ENCODE measurements at regions of chr6 and their contacts with region 1.

Region 1: GRCh38 chr6:13767121-13767808 is 47.1 kb downstream of the MCUR1 start:
- DNase-seq: peak; percentile 50
- ATAC-seq: peak; percentile 47
- H3K4me3 ChIP-seq: peak overlapping the region in 3 of 5 experiments; percentile 35 to 55 (median 40)
- H3K4me3 Mint-ChIP-seq: peak overlapping the region; percentile 84
- H3K27ac ChIP-seq: no peak overlapping the region
- H3K27ac Mint-ChIP-seq: no peak overlapping the region
- H3K4me1 ChIP-seq: peaks cover 24 to 29% of the 10 kb centered on the region in 2 donors
- H3K4me1 Mint-ChIP-seq: peaks cover 45% of the 10 kb centered on the region
- H3K27me3 ChIP-seq: no peaks in the 10 kb centered on the region
- H3K27me3 Mint-ChIP-seq: peaks cover 6% of the 10 kb centered on the region
- CTCF ChIP-seq: no peak

Region 2: DNA sequence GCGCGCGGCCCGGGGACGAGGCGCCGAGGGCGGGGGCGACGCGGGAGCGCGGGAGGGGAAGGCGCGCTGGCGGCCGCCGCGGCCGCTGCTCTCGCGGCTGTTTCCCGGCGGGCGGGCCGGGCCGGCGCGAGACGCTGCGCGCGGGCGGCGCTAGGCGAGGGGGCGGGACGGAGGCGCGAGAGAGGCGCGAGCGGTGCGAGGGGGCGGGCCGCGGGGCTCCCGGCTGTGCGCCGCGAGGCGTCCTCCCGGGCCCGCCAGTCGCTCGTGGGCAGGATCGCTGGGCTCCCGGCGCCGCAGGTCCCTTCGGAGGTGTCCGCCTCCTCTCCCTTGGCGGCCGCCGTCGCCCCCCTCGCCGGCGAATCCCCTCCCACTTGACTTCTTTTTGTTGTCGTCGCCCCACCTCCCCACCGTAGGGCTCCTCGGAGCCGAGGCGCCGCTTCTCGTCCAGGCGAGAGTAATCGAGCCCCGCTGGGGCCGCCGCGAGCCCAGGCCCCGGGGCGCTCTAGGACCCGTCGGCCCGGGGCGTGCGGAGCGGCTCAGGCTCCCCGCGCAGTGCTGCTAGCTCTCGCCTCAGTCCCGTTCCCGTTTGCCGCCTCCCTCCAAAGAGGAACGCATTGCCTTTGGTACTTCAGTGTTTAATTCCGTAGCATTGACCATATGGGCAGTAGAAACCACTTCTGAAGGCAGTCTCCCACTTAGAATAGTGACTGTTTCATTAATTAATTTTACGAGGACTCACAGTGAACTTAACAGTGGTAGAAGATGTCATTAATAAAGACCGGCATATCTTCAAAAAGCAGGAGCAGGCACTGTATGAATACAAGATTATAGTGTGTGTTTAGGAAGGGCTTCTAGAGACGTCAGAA is 55.3 kb before region 1 on chr6 and contains the start of gene RANBP9:
- CTCF ChIA-PET with region 1: interaction called, 3 read pairs
- POLR2A ChIA-PET with region 1: no interaction called
- intact Hi-C with region 1: loop called (anchors 5 kb)
- DNase-seq: peak; percentile 94
- ATAC-seq: peak; percentile 82
- H3K4me3 ChIP-seq: peak within 1 kb of the TSS; percentile 58 to 88 (median 78)
- H3K4me3 Mint-ChIP-seq: peak within 1 kb of the TSS; percentile 96
- H3K27ac ChIP-seq: peak within 1 kb of the TSS; percentile 80 to 84
- H3K27ac Mint-ChIP-seq: peak within 1 kb of the TSS; percentile 96
- H3K4me1 ChIP-seq: peaks cover 29 to 33% of the 10 kb centered on the region in 2 donors
- H3K4me1 Mint-ChIP-seq: peaks cover 41% of the 10 kb centered on the region
- H3K27me3 ChIP-seq: no peaks in the 10 kb centered on the region
- H3K27me3 Mint-ChIP-seq: no peaks in the 10 kb centered on the region
- CTCF ChIP-seq: no peak
- total RNA-seq, gene RANBP9: 34.1 and 39.0 TPM in 2 replicates